Uterus (tissue), 4 donors: ENCODE measurements at regions of chr3 and their contacts with region 1.

Region 1: GRCh38 chr3:172317984-172318383 is 130.3 kb downstream of the GHSR start:
- DNase-seq: peak; percentile 69 to 75
- H3K4me3 ChIP-seq: no peak overlapping the region
- H3K27ac ChIP-seq: peak overlapping the region; percentile 82 to 95
- H3K4me1 ChIP-seq: peaks cover 20 to 55% of the 10 kb centered on the region in 2 donors
- H3K27me3 ChIP-seq: no peaks in the 10 kb centered on the region
- CTCF ChIP-seq: no peak
- POLR2A ChIP-seq: no peak

Region 2: DNA sequence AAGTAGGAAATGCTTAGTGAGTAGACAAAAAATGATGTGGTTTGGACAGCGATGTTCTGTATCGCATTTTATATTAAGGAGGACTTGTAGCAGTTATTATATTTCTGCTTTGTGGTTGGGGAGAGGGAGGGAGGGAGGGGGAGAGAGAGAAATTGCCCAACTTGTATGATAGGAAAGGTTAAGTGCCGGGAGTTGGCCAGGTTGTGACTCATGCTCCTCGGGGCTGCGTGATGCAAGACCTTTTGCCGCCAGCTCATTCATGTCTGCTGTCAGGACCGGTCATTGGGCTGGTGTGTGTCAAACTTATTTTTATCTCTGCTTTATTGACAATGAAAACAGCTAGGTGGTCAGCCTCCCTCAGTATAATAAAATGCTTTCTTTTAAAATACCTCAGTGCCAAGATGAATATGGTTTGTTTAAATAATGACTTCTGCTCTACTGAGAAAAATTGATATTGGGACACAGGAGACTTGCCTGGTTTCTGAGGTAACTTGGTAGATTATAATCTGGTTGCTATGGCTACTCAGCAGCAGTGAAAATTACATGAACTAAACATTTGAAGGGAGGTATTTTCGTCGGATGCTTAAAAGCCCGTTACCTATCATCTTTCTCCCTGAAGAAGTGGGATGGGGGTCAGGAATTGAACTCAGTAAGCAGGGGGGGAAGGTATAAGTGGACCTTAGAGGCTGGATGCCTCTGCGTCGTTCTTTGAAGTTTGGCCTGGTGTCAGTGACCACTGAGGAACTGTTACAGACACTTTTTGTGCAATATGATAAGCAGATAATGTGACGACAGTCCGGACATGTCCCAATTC is 187.9 kb before region 1 on chr3:
- intact Hi-C with region 1: loop called (anchors 10 kb)
- DNase-seq: peak; percentile 94 to 97
- H3K4me3 ChIP-seq: no peak overlapping the region
- H3K27ac ChIP-seq: peak overlapping the region; percentile 82 to 86
- H3K4me1 ChIP-seq: peaks cover 9 to 29% of the 10 kb centered on the region in 2 donors
- H3K27me3 ChIP-seq: no peaks in the 10 kb centered on the region
- CTCF ChIP-seq: no peak
- POLR2A ChIP-seq: no peak

Region 3: DNA sequence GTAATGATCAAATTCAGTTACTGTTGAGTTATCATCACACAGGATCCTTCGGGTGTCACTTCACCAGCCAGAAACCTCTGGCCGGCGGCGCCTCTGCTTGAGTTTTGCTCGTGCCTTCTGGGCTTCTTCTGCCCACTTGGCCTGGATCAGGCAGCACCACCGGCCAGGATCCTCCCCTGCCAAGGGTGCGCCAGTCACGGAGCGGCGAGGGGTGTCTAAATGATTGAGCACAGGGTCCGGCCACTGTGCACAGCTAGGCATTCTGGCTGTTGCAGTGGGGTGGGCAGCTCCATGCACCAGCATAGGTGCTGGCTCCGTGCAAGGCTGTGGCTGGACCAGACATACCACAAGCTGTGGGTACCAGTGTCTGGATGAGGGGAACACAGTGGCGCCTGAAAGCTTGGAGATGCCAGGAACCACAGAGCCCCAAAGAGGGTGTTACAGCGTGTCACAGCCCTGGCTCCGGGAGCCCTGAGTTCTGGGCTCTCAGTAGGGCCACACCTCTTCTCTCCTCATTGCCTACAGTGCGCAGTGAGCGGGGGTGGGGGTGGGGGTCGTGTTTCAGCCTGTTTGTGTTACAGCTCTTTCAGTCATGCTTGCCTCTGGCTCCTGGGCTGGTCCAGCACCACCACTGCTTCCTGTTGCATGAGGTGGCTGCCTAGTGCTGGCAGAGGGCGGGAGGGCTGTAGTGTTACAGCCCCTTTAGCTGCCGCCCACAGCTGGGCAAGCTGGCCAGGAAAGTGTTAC is 109.2 kb before region 1 on chr3:
- intact Hi-C with region 1: no loop called
- DNase-seq: no peak
- H3K4me3 ChIP-seq: no peak overlapping the region
- H3K27ac ChIP-seq: no peak overlapping the region
- H3K4me1 ChIP-seq: peaks cover 0 to 3% of the 10 kb centered on the region in 2 donors
- H3K27me3 ChIP-seq: no peaks in the 10 kb centered on the region
- CTCF ChIP-seq: no peak
- POLR2A ChIP-seq: no peak